GM12878 (cell line): ENCODE measurements at regions of chr4 and their contacts with region 1.

Region 1: DNA sequence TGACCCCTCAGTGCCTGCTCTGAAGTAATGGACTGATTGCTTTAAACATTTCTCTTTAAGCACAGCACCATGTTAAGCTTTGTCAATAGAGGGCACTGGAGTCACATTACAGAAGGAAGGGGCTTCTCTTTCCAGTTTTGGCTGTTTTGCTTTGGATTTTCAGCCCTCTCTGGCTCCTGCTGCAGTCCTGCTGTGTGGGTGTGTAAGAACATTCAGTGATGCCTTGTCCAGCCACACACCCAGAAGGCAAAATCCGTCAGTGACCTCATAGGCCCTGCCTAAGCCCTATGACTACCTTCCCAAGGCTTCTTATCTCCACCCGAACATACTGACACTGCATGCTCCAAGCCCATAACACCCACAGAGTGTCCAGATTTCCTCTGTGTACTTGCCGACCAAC is 215.3 kb upstream of the CTSO start:
- DNase-seq: no peak
- ATAC-seq: peak; percentile 89
- H3K4me3 ChIP-seq: no peak overlapping the region
- H3K27ac ChIP-seq: no peak overlapping the region
- H3K4me1 ChIP-seq: no peaks in the 10 kb centered on the region
- H3K27me3 ChIP-seq: no peaks in the 10 kb centered on the region
- CTCF ChIP-seq: peak; percentile 61 to 72 (median 66)
- EP300 ChIP-seq: no peak
- POLR2A ChIP-seq: no peak
- RAD21 ChIP-seq: peak; percentile 98

Region 2: GRCh38 chr4:155972098-155972497 is 196.9 kb before region 1 on chr4:
- CTCF ChIA-PET with region 1: interaction called, 3 read pairs
- POLR2A ChIA-PET with region 1: no interaction called
- RAD21 ChIA-PET with region 1: no interaction called
- SMC1A ChIA-PET with region 1: interaction called, 4 read pairs
- in situ Hi-C with region 1: no loop called
- intact Hi-C with region 1: loop called (anchors 5 kb)
- DNase-seq: peak; percentile 8
- ATAC-seq: peak; percentile 76
- H3K4me3 ChIP-seq: no peak overlapping the region
- H3K27ac ChIP-seq: no peak overlapping the region
- H3K4me1 ChIP-seq: peaks cover 11% of the 10 kb centered on the region
- H3K27me3 ChIP-seq: no peaks in the 10 kb centered on the region
- CTCF ChIP-seq: peak; percentile 41 to 49 (median 44); a peak in 5 of 6 replicates
- EP300 ChIP-seq: no peak
- POLR2A ChIP-seq: no peak
- RAD21 ChIP-seq: peak; percentile 68

Region 3: DNA sequence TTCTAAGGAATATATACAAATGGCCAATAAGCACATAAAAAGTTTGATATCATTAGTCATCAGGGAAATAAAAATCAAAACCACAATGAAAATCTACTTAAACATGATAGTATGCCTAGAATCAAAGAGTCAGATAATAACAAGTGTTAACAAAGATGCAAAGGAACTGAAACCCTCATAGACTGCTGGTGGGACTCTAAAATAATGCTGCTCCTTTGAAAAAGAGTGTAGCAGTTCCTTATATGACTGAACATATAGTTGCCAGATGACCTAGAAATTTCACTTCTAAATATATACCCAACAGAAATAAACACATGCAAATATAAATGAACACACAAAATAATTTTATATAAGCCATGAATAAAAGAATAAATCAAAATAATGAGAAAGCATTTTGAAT is 10.3 kb before region 1 on chr4:
- CTCF ChIA-PET with region 1: interaction called, 11 read pairs
- POLR2A ChIA-PET with region 1: no interaction called
- RAD21 ChIA-PET with region 1: interaction called, 3 read pairs
- SMC1A ChIA-PET with region 1: interaction called, 11 read pairs
- in situ Hi-C with region 1: no loop called
- intact Hi-C with region 1: no loop called
- DNase-seq: no peak
- ATAC-seq: peak; percentile 99
- H3K4me3 ChIP-seq: no peak overlapping the region
- H3K27ac ChIP-seq: no peak overlapping the region
- H3K4me1 ChIP-seq: peaks cover 6% of the 10 kb centered on the region; the same call in 1 of the 2 replicates
- H3K27me3 ChIP-seq: no peaks in the 10 kb centered on the region
- CTCF ChIP-seq: no peak
- EP300 ChIP-seq: peak; percentile 52 to 57; a peak in 3 of 4 replicates
- POLR2A ChIP-seq: no peak
- RAD21 ChIP-seq: no peak

Region 4: GRCh38 chr4:156378033-156378665 is 209.1 kb after region 1 on chr4:
- CTCF ChIA-PET with region 1: interaction called, 27 read pairs
- POLR2A ChIA-PET with region 1: no interaction called
- RAD21 ChIA-PET with region 1: interaction called, 15 read pairs
- SMC1A ChIA-PET with region 1: interaction called, 40 read pairs
- in situ Hi-C with region 1: no loop called
- intact Hi-C with region 1: loop called (anchors 1 kb)
- DNase-seq: no peak
- ATAC-seq: peak; percentile 71
- H3K4me3 ChIP-seq: no peak overlapping the region
- H3K27ac ChIP-seq: no peak overlapping the region
- H3K4me1 ChIP-seq: no peaks in the 10 kb centered on the region
- H3K27me3 ChIP-seq: no peaks in the 10 kb centered on the region
- CTCF ChIP-seq: peak; percentile 37 to 58 (median 53); a peak in 5 of 6 replicates
- EP300 ChIP-seq: no peak
- POLR2A ChIP-seq: no peak
- RAD21 ChIP-seq: peak; percentile 62

Region 5: GRCh38 chr4:156677131-156677531 is 508.1 kb after region 1 on chr4:
- CTCF ChIA-PET with region 1: interaction called, 5 read pairs
- POLR2A ChIA-PET with region 1: no interaction called
- RAD21 ChIA-PET with region 1: interaction called, 3 read pairs
- SMC1A ChIA-PET with region 1: interaction called, 5 read pairs
- in situ Hi-C with region 1: loop called (anchors 10 kb)
- intact Hi-C with region 1: loop called (anchors 2 kb)
- DNase-seq: no peak
- ATAC-seq: peak; percentile 87
- H3K4me3 ChIP-seq: no peak overlapping the region
- H3K27ac ChIP-seq: no peak overlapping the region
- H3K4me1 ChIP-seq: no peaks in the 10 kb centered on the region
- H3K27me3 ChIP-seq: no peaks in the 10 kb centered on the region
- CTCF ChIP-seq: peak; percentile 29 to 51 (median 36); a peak in 4 of 6 replicates
- EP300 ChIP-seq: no peak
- POLR2A ChIP-seq: no peak
- RAD21 ChIP-seq: peak; percentile 77